Sciatic nerve (tissue), 2 donors: ENCODE measurements at regions of chr9 and their contacts with region 1.

Region 1: GRCh38 chr9:79428422-79428821 is 143.3 kb upstream of the TLE4 start:
- DNase-seq: no peak
- ATAC-seq: no peak

Region 2: GRCh38 chr9:79465156-79465555 is 36.7 kb after region 1 on chr9:
- intact Hi-C with region 1: no loop called
- DNase-seq: no peak
- ATAC-seq: no peak

Region 3: GRCh38 chr9:80231201-80231950 is 803.0 kb after region 1 on chr9:
- intact Hi-C with region 1: loop called (anchors 5 kb)
- DNase-seq: no peak
- ATAC-seq: no peak